Activated CD4-positive, alpha-beta memory T cell treated with anti-CD3 and anti-CD28 coated beads for 36 hours (primary cell): ENCODE measurements at regions of chr18 and their contacts with region 1.

Region 1: DNA sequence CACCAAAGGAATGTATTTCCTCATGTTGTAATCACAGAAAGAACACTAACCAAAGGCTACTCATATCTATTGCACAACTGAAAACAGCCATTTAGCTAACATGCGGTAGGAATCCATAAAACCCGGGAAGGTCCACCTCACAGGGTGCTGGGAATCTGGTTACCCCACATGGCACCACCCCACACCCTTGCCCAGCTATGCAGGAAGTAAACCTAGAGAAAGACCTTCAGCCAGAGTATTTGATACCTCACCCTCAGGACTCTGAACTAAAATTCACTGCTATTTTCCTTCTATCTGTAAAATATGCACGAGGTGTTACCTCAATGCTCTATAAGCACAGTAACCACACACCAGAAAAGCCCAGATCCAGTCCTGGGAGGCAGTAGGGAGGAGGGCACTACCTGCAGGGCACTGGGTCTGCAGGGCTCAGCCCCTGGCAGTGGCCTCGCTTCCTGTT is 45.8 kb downstream of the PTPN2 start:
- DNase-seq: peak; percentile 34
- H3K4me3 Mint-ChIP-seq: peak overlapping the region; percentile 45
- H3K27ac Mint-ChIP-seq: peak overlapping the region; percentile 94
- H3K4me1 Mint-ChIP-seq: peaks cover 63% of the 10 kb centered on the region
- H3K27me3 Mint-ChIP-seq: no peaks in the 10 kb centered on the region

Region 2: GRCh38 chr18:12803096-12803936 is 34.9 kb before region 1 on chr18:
- CTCF ChIA-PET with region 1: no interaction called
- POLR2A ChIA-PET with region 1: no interaction called
- intact Hi-C with region 1: loop called (anchors 2 kb)
- DNase-seq: no peak
- H3K4me3 Mint-ChIP-seq: no peak overlapping the region
- H3K27ac Mint-ChIP-seq: no peak overlapping the region
- H3K4me1 Mint-ChIP-seq: peaks cover 10% of the 10 kb centered on the region
- H3K27me3 Mint-ChIP-seq: no peaks in the 10 kb centered on the region

Region 3: GRCh38 chr18:12857215-12857905 is 19.2 kb after region 1 on chr18:
- CTCF ChIA-PET with region 1: interaction called, 3 read pairs
- POLR2A ChIA-PET with region 1: interaction called, 7 read pairs
- intact Hi-C with region 1: loop called (anchors 1 kb)
- DNase-seq: peak; percentile 76
- H3K4me3 Mint-ChIP-seq: peak overlapping the region; percentile 18
- H3K27ac Mint-ChIP-seq: peak overlapping the region; percentile 84
- H3K4me1 Mint-ChIP-seq: peaks cover 64% of the 10 kb centered on the region
- H3K27me3 Mint-ChIP-seq: no peaks in the 10 kb centered on the region

Region 4: GRCh38 chr18:12921178-12921577 is 83.0 kb after region 1 on chr18:
- CTCF ChIA-PET with region 1: no interaction called
- POLR2A ChIA-PET with region 1: interaction called, 4 read pairs
- intact Hi-C with region 1: loop called (anchors 1 kb)
- DNase-seq: peak; percentile 61
- H3K4me3 Mint-ChIP-seq: no peak overlapping the region
- H3K27ac Mint-ChIP-seq: no peak overlapping the region
- H3K4me1 Mint-ChIP-seq: peaks cover 6% of the 10 kb centered on the region
- H3K27me3 Mint-ChIP-seq: no peaks in the 10 kb centered on the region

Region 5: DNA sequence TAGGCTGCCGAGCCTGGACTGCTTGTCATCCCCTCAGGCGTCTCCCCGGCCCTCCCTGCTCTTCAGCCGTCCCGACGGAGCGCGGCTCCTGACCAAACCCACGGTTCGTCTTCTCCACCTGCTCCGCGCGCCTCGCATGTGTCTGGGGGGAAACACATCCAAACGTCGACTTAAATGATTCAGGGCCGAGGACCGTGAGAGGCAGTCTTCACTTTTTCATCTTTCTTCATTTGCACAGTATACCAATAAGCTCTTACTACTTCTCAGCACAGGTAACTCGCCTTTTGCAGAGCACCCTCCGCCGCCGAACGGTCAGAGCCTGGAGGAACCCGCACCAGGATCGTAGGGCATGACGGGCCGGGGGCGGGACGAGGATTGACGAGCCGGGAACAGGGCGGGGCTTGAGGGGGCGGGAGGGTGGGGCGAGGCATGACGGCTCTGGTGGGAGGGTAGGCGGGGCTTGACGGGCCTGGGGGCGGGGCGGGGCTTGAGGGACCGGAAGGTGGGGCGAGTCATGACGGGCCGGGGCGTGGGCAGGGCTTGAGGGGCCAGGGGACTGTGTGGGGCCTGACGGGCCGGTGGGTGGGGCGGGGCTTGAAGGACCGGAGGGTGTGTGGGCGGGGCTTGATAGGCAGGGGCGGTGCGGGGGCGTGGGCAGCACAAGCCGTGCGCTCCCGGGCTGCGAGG is 109.3 kb after region 1 on chr18 and contains the start of gene SEH1L:
- CTCF ChIA-PET with region 1: no interaction called
- POLR2A ChIA-PET with region 1: no interaction called
- intact Hi-C with region 1: loop called (anchors 1 kb)
- DNase-seq: peak; percentile 100
- H3K4me3 Mint-ChIP-seq: peak within 1 kb of the TSS; percentile 95
- H3K27ac Mint-ChIP-seq: peak within 1 kb of the TSS; percentile 97
- H3K4me1 Mint-ChIP-seq: peaks cover 45% of the 10 kb centered on the region
- H3K27me3 Mint-ChIP-seq: no peaks in the 10 kb centered on the region
- total RNA-seq, gene SEH1L: 90.3 to 92.5 TPM

Region 6: DNA sequence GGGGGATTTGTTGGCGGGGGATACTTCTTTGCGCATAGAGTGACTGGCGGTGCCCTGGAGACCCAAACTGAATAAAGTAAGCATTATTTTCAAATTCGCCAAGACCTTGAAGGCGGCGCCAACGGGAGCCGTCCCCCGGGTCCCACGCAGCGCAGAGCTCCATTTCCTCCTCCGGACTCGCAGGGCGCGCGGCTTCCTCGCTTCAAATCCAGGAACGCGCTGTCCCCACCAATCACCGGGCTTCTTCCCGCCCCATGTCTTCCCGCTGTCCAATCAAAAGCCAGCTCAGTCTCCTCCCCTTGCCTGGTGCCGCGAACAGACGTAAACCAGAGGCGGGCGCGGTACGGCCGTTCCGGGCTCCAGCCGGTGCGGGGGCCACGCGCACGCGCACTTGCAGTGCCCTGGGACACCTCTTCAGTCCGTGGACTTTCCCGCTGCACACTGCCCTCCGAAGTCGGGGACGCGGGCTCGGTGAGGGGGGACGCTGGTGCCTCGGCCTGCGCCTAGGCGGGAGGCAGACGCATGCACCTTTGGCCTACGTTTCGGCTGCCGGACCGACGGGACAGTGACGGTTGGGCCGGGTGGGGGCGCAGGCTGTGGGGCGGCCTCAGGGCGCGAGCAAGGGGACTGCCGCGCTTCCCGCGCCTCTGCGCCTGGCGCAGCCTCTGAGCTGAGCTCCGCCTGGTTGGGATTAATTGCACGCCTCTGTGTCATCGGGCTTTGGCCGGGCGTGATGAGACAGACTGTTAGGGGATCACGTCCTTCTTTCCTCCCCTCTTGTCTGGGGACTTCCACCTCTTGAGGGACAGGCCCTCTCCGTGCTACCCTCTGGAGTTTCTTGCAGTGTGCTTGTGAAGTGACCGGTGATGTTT is 153.0 kb after region 1 on chr18 and contains the start of gene CEP192:
- CTCF ChIA-PET with region 1: no interaction called
- POLR2A ChIA-PET with region 1: no interaction called
- intact Hi-C with region 1: loop called (anchors 1 kb)
- DNase-seq: peak; percentile 99
- H3K4me3 Mint-ChIP-seq: peak within 1 kb of the TSS; percentile 96
- H3K27ac Mint-ChIP-seq: peak within 1 kb of the TSS; percentile 92
- H3K4me1 Mint-ChIP-seq: peaks cover 15% of the 10 kb centered on the region
- H3K27me3 Mint-ChIP-seq: peaks cover 3% of the 10 kb centered on the region
- total RNA-seq, gene CEP192: 31.0 to 34.0 TPM

Region 7: DNA sequence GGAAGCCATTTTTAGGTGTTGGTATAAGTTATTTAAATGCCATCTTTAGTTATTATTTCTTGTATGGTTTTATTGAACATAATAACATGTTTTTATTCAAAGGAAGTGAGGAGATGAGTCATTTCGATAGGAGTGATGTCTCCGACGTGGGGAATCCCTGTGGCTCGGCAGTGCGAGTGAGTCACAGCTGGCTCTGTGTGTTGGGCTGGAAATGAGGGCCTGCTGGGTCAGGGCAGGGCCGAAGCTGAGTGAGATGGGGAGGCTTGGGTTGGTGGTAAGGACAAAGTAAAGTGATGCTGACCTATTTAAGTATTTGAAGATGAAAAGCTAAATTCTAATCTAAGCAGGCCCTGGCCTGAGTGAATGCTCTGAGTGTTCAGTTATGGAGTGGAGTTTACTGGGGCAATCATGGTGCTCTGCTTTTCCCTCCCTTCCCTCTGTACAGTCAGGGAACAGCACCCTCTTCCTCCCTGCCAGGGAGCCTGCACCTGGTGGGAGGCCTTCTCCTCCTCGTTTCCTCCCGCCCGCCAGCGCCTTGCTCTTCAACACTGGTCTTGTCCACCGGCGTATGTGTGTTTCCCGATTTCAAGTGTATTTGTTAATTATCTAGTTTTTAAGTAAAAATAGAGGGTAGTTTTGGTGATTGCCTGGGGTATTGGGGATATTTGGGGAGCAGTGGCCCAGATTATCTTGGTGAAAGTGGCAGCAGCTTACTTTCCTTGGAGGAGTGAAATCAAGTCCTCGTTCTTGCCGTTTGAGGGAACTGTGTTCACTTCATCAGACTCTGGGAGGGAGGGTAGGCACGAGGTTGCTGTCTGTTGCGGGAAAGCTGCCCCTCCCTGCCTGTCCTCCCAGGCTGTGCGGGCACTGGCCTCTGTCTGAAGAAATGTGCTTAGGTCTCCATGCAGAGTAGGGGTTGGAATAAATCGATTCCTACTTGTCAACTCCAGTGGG is 537.4 kb after region 1 on chr18:
- CTCF ChIA-PET with region 1: no interaction called
- POLR2A ChIA-PET with region 1: no interaction called
- intact Hi-C with region 1: loop called (anchors 1 kb)
- DNase-seq: peak; percentile 92
- H3K4me3 Mint-ChIP-seq: peak overlapping the region; percentile 49
- H3K27ac Mint-ChIP-seq: peak overlapping the region; percentile 97
- H3K4me1 Mint-ChIP-seq: peaks cover 79% of the 10 kb centered on the region
- H3K27me3 Mint-ChIP-seq: no peaks in the 10 kb centered on the region